ENCODE measurements at regions of chr16 and their contacts with region 1.

Region 1: DNA sequence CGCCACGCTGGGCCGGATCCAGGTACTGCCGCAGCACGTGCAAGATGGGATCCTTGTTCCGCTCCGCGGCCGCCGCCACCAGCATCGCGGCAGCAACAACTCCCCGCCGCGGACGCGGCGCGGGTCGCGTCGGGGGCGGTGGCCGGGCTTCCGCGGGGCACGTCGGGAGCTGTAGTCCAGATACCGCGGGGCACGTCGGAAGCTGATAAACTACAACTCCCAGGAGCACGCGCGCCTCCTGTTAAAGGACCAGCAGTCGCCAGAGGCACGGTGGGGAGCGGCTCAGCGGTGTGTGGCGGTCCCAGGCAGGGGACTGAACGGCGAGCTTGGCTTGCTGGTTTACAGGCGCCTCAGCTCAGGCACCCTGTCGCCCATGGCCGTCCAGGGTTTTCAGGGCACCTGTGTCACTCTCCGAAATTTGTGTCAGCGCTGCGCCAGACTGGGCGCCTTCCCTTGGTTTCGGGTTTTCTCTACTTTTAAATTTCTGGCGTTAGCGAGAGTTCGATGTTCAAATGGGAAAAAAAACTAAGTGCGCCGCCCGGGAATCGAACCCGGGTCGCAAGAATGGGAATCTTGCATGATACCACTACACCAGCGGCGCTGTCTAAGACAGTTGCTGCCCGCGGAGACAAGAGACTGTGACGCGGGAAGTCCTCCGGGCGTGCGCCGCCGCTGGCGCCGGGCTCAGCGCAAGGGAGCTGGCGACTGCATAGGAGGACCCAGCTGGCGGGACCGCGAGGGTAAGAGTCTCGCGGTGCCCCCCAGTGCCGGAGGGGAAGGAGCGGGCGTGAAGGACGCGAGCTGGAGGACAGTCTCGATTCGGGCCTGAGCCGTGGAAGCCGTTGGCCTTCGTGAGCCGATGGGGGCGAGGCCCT is at the start of gene METTL26:
- DNase-seq: peak; percentile 97
- ATAC-seq: peak; percentile 89
- H3K4me3 Mint-ChIP-seq: peak within 1 kb of the TSS; percentile 87
- H3K27ac Mint-ChIP-seq: peak within 1 kb of the TSS; percentile 91
- H3K4me1 Mint-ChIP-seq: peaks cover 13% of the 10 kb centered on the region
- H3K27me3 Mint-ChIP-seq: no peaks in the 10 kb centered on the region
- total RNA-seq, gene METTL26: 116 to 127 TPM

Region 2: GRCh38 chr16:228818-229730 is 407.4 kb before region 1 on chr16 and contains the start of gene LUC7L:
- CTCF ChIA-PET with region 1: no interaction called
- POLR2A ChIA-PET with region 1: no interaction called
- intact Hi-C with region 1: loop called in 1 of 2 experiments (anchors 1 kb)
- DNase-seq: peak; percentile 93
- ATAC-seq: peak; percentile 90
- H3K4me3 Mint-ChIP-seq: peak within 1 kb of the TSS; percentile 92
- H3K27ac Mint-ChIP-seq: peak within 1 kb of the TSS; percentile 85
- H3K4me1 Mint-ChIP-seq: peaks cover 30% of the 10 kb centered on the region
- H3K27me3 Mint-ChIP-seq: no peaks in the 10 kb centered on the region
- total RNA-seq, gene LUC7L: 44.6 to 50.1 TPM

Region 3: DNA sequence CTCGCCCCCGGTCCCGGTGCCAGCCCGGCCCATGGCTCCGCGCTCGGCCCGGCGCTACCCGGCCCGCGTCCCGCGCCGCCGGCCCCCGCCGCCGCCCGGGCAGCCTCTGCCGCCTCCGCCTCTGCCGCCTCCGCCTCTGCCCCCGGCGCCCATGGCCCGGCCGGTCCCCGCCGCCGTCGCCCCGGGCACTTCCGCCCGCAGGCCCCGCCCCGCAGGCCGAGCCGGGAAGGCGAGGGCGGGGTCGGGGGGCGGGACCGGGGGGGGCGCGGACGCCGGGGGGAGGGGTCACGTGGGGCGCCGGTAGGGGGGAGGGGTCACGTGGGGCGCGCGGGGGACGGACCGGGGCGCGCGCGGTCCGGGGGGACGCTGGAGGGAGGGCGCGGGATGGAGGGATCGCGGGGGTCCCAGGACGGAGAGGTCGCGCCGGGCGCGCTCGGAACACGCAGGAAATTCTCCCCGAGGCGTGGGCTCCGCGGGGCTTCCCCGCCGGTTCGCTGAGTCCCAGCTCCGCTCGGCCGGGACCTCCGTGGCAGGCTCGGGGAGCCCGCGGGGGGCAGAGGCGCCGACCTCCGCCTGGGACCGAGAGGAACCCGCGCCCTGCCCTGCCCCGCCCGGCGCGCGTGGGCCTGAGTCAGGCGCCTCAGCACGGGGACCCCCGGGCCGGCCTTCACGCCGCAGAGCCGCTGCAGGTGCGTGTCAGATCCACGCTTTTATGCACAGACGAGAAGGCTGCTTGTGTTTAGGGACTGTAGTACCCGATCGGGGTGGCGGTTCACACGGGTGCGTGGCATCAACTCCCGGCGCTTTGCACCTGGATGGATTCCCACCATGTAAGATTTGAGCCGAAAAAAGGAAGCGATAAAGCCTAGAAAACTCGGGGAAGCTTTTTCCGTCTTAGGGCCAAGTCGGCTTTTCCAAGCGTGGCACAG is 254.4 kb before region 1 on chr16 and contains the start of gene PGAP6:
- CTCF ChIA-PET with region 1: no interaction called
- POLR2A ChIA-PET with region 1: no interaction called
- intact Hi-C with region 1: loop called in 1 of 2 experiments (anchors 5 kb)
- DNase-seq: peak; percentile 83
- ATAC-seq: peak; percentile 73
- H3K4me3 Mint-ChIP-seq: peak within 1 kb of the TSS; percentile 74
- H3K27ac Mint-ChIP-seq: no peak within 1 kb of the TSS
- H3K4me1 Mint-ChIP-seq: peaks cover 24% of the 10 kb centered on the region
- H3K27me3 Mint-ChIP-seq: no peaks in the 10 kb centered on the region
- total RNA-seq, gene PGAP6: 22.9 to 40.8 TPM

Region 4: GRCh38 chr16:425082-425718 is 211.2 kb before region 1 on chr16 and contains the start of gene RAB11FIP3:
- CTCF ChIA-PET with region 1: no interaction called
- POLR2A ChIA-PET with region 1: no interaction called
- intact Hi-C with region 1: loop called in 1 of 2 experiments (anchors 1 kb)
- DNase-seq: peak; percentile 90
- ATAC-seq: peak; percentile 93
- H3K4me3 Mint-ChIP-seq: peak within 1 kb of the TSS; percentile 74
- H3K27ac Mint-ChIP-seq: peak within 1 kb of the TSS; percentile 47
- H3K4me1 Mint-ChIP-seq: peaks cover 30% of the 10 kb centered on the region
- H3K27me3 Mint-ChIP-seq: peaks cover 5% of the 10 kb centered on the region
- total RNA-seq, gene RAB11FIP3: 14.2 to 17.0 TPM

Region 5: GRCh38 chr16:648781-649589 is 12.5 kb after region 1 on chr16 and contains the start of gene WDR90:
- CTCF ChIA-PET with region 1: interaction called, 6 read pairs
- POLR2A ChIA-PET with region 1: interaction called, 4 read pairs
- intact Hi-C with region 1: loop called in 1 of 2 experiments (anchors 1 kb)
- DNase-seq: peak; percentile 96
- ATAC-seq: peak; percentile 92
- H3K4me3 Mint-ChIP-seq: peak within 1 kb of the TSS; percentile 81
- H3K27ac Mint-ChIP-seq: peak within 1 kb of the TSS; percentile 73
- H3K4me1 Mint-ChIP-seq: peaks cover 15% of the 10 kb centered on the region
- H3K27me3 Mint-ChIP-seq: no peaks in the 10 kb centered on the region
- total RNA-seq, gene WDR90: 43.6 to 55.9 TPM

Region 6: GRCh38 chr16:684067-684794 is 47.8 kb after region 1 on chr16 and contains the start of gene JMJD8:
- CTCF ChIA-PET with region 1: no interaction called
- POLR2A ChIA-PET with region 1: no interaction called
- intact Hi-C with region 1: loop called (anchors 1 to 5 kb)
- DNase-seq: peak; percentile 99
- ATAC-seq: peak; percentile 80
- H3K4me3 Mint-ChIP-seq: peak within 1 kb of the TSS; percentile 76
- H3K27ac Mint-ChIP-seq: peak within 1 kb of the TSS; percentile 58
- H3K4me1 Mint-ChIP-seq: peaks cover 40% of the 10 kb centered on the region
- H3K27me3 Mint-ChIP-seq: no peaks in the 10 kb centered on the region
- total RNA-seq, gene JMJD8: 26.1 to 31.4 TPM

Region 7: GRCh38 chr16:970766-971581 is 334.5 kb after region 1 on chr16 and contains the start of gene LMF1:
- CTCF ChIA-PET with region 1: no interaction called
- POLR2A ChIA-PET with region 1: no interaction called
- intact Hi-C with region 1: loop called in 1 of 2 experiments (anchors 2 kb)
- DNase-seq: peak; percentile 98
- ATAC-seq: peak; percentile 93
- H3K4me3 Mint-ChIP-seq: peak within 1 kb of the TSS; percentile 76
- H3K27ac Mint-ChIP-seq: peak within 1 kb of the TSS; percentile 78
- H3K4me1 Mint-ChIP-seq: peaks cover 15% of the 10 kb centered on the region
- H3K27me3 Mint-ChIP-seq: no peaks in the 10 kb centered on the region
- total RNA-seq, gene LMF1: 9.5 to 12.2 TPM

Measured in activated CD4-positive, alpha-beta T cell treated with anti-CD3 and anti-CD28 coated beads for 36 hours (primary cell).